OCI-LY7 (cell line): ENCODE measurements at regions of chr11 and their contacts with region 1.

Region 1: GRCh38 chr11:117178210-117179034 is at the start of gene SIDT2:
- DNase-seq: peak; percentile 96
- H3K4me3 ChIP-seq: peak within 1 kb of the TSS; percentile 88
- H3K27ac ChIP-seq: peak within 1 kb of the TSS; percentile 52
- H3K4me1 ChIP-seq: peaks cover 30% of the 10 kb centered on the region
- CTCF ChIP-seq: no peak
- total RNA-seq, gene SIDT2: 18.3 and 18.6 TPM in 2 replicates

Region 2: GRCh38 chr11:116772443-116773202 is 405.8 kb before region 1 on chr11 and contains the start of gene BUD13:
- CTCF ChIA-PET with region 1: no interaction called
- POLR2A ChIA-PET with region 1: no interaction called
- intact Hi-C with region 1: loop called (anchors 2 kb)
- DNase-seq: peak; percentile 94
- H3K4me3 ChIP-seq: peak within 1 kb of the TSS; percentile 81
- H3K27ac ChIP-seq: peak within 1 kb of the TSS; percentile 81
- H3K4me1 ChIP-seq: peaks cover 43% of the 10 kb centered on the region
- CTCF ChIP-seq: no peak
- total RNA-seq, gene BUD13: 28.6 and 34.1 TPM in 2 replicates

Region 3: DNA sequence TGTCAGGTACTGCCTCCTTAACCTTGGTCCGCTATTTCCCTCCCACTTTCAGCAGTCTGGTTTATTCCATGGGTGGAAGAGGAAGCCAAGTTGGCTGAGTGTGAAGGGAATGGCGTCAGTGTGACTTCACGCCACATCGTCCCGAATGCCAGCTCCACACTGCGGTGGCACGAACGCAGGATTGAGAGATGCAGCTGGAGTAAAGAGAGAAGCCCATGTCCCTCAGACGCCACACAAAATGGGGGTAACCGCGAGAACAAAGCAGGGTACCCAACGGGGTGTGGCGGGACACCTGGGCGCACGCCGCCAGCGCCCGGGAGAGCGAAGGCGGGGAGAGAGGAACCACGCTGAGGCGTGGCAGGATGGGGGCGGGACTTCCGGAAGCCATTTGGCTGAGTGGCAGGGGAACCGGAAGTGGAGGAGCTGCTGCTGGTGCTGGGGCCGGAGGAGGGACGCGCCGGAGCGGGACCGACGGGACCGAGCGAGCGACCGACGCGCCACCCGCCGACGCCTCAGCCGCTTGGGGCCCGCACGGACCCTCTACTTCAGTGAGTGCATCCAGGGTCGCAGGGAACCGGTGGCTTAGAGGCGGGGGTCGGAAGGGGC is 34.4 kb before region 1 on chr11 and contains the start of gene PAFAH1B2:
- CTCF ChIA-PET with region 1: interaction called, 8 read pairs
- POLR2A ChIA-PET with region 1: interaction called, 18 read pairs
- intact Hi-C with region 1: loop called (anchors 1 kb)
- DNase-seq: peak; percentile 98
- H3K4me3 ChIP-seq: peak within 1 kb of the TSS; percentile 94
- H3K27ac ChIP-seq: peak within 1 kb of the TSS; percentile 64
- H3K4me1 ChIP-seq: peaks cover 30% of the 10 kb centered on the region
- CTCF ChIP-seq: no peak
- total RNA-seq, gene PAFAH1B2: 62.8 and 65.3 TPM in 2 replicates

Region 4: GRCh38 chr11:117226388-117227385 is 48.3 kb after region 1 on chr11:
- CTCF ChIA-PET with region 1: interaction called, 7 read pairs
- POLR2A ChIA-PET with region 1: interaction called, 30 read pairs
- intact Hi-C with region 1: loop called (anchors 1 kb)
- DNase-seq: peak; percentile 85
- H3K4me3 ChIP-seq: no peak overlapping the region
- H3K27ac ChIP-seq: no peak overlapping the region
- H3K4me1 ChIP-seq: peaks cover 21% of the 10 kb centered on the region
- CTCF ChIP-seq: peak; percentile 88